B cell (primary cell): ENCODE measurements at regions of chr3 and their contacts with region 1.

Region 1: DNA sequence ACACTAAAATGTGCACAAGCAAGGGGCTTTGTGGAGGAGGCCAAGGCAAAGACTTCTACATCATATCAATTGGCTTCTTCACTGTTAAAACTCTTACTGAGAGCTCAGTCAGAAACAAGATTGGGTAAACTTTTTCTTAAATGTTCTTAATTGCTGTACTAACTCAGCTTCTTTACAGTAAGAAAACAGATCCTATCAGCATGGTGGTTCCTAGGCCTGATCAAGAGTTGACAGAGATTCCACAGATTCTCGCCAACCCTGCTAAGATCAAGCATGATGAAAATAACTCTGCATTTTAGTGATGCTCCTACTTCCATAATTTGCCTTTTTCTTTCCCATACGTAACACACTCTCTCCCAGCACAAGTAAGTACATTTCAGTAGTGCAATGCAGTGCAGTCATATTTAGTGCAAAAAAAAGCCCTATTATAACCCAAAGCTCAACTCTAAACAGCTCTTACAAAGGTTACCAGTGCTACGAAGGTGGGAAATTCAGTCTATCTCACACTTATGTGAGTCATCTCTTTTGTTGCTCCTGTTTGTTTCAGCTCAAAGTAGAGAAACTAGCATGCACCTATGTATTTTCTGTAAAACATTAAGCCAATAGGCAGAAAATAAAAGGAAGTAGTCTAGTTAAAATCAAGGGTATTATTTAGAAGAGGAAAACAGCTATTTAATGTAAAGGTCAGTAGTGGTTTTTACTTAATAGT is 29.9 kb downstream of the TIGIT start:
- DNase-seq: no peak
- ATAC-seq: no peak
- H3K4me3 ChIP-seq: no peak overlapping the region
- H3K4me3 Mint-ChIP-seq: no peak overlapping the region
- H3K27ac ChIP-seq: no peak overlapping the region
- H3K27ac Mint-ChIP-seq: peak overlapping the region; percentile 8
- H3K4me1 ChIP-seq: no peaks in the 10 kb centered on the region
- H3K4me1 Mint-ChIP-seq: peaks cover 25% of the 10 kb centered on the region
- H3K27me3 ChIP-seq: no peaks in the 10 kb centered on the region
- H3K27me3 Mint-ChIP-seq: no peaks in the 10 kb centered on the region
- CTCF ChIP-seq: no peak

Region 2: GRCh38 chr3:114231616-114232015 is 92.1 kb before region 1 on chr3:
- CTCF ChIA-PET with region 1: no interaction called
- POLR2A ChIA-PET with region 1: no interaction called
- intact Hi-C with region 1: no loop called
- DNase-seq: no peak
- ATAC-seq: no peak
- H3K4me3 ChIP-seq: no peak overlapping the region
- H3K4me3 Mint-ChIP-seq: no peak overlapping the region
- H3K27ac ChIP-seq: no peak overlapping the region
- H3K27ac Mint-ChIP-seq: no peak overlapping the region
- H3K4me1 ChIP-seq: peaks cover 16 to 19% of the 10 kb centered on the region in 2 donors
- H3K4me1 Mint-ChIP-seq: peaks cover 31% of the 10 kb centered on the region
- H3K27me3 ChIP-seq: no peaks in the 10 kb centered on the region
- H3K27me3 Mint-ChIP-seq: no peaks in the 10 kb centered on the region
- CTCF ChIP-seq: no peak

Region 3: GRCh38 chr3:114336122-114336697 is 12.5 kb after region 1 on chr3:
- CTCF ChIA-PET with region 1: interaction called, 21 read pairs
- POLR2A ChIA-PET with region 1: no interaction called
- intact Hi-C with region 1: no loop called
- DNase-seq: peak; percentile 25
- ATAC-seq: no peak
- H3K4me3 ChIP-seq: no peak overlapping the region
- H3K4me3 Mint-ChIP-seq: no peak overlapping the region
- H3K27ac ChIP-seq: no peak overlapping the region
- H3K27ac Mint-ChIP-seq: no peak overlapping the region
- H3K4me1 ChIP-seq: peaks cover 14% of the 10 kb centered on the region in 2 donors
- H3K4me1 Mint-ChIP-seq: peaks cover 31% of the 10 kb centered on the region
- H3K27me3 ChIP-seq: no peaks in the 10 kb centered on the region
- H3K27me3 Mint-ChIP-seq: no peaks in the 10 kb centered on the region
- CTCF ChIP-seq: peak; percentile 56